Activated naive CD4-positive, alpha-beta T cell treated with anti-CD3 and anti-CD28 coated beads, Interleukin-2, amount 10 ng/mL, durations not matched to agents 7 days and 5 days (primary cell): ENCODE measurements at regions of chr6 and their contacts with region 1.

Region 1: GRCh38 chr6:119313937-119314884 is 35.4 kb downstream of the MAN1A1 start:
- DNase-seq: peak; percentile 37
- H3K4me3 Mint-ChIP-seq: peak overlapping the region; percentile 8
- H3K27ac Mint-ChIP-seq: peak overlapping the region; percentile 84
- H3K4me1 Mint-ChIP-seq: peaks cover 60% of the 10 kb centered on the region
- H3K27me3 Mint-ChIP-seq: no peaks in the 10 kb centered on the region

Region 2: GRCh38 chr6:119333707-119334295 is 19.6 kb after region 1 on chr6:
- CTCF ChIA-PET with region 1: interaction called, 13 read pairs
- DNase-seq: no peak
- H3K4me3 Mint-ChIP-seq: no peak overlapping the region
- H3K27ac Mint-ChIP-seq: no peak overlapping the region
- H3K4me1 Mint-ChIP-seq: peaks cover 20% of the 10 kb centered on the region
- H3K27me3 Mint-ChIP-seq: no peaks in the 10 kb centered on the region